ENCODE measurements at regions of chr1 and their contacts with region 1.

Region 1: GRCh38 chr1:44819608-44820327 is 11.4 kb downstream of the BTBD19 start:
- DNase-seq: peak; percentile 87
- H3K4me3 Mint-ChIP-seq: peak overlapping the region; percentile 85
- H3K27ac Mint-ChIP-seq: peak overlapping the region; percentile 98
- H3K4me1 Mint-ChIP-seq: peaks cover 45% of the 10 kb centered on the region
- H3K27me3 Mint-ChIP-seq: no peaks in the 10 kb centered on the region

Region 2: GRCh38 chr1:44739361-44740178 is 80.2 kb before region 1 on chr1 and contains the start of gene KIF2C:
- CTCF ChIA-PET with region 1: no interaction called
- POLR2A ChIA-PET with region 1: interaction called, 13 read pairs
- DNase-seq: peak; percentile 98
- H3K4me3 Mint-ChIP-seq: peak within 1 kb of the TSS; percentile 91
- H3K27ac Mint-ChIP-seq: peak within 1 kb of the TSS; percentile 84
- H3K4me1 Mint-ChIP-seq: peaks cover 45% of the 10 kb centered on the region
- H3K27me3 Mint-ChIP-seq: peaks cover 3% of the 10 kb centered on the region
- total RNA-seq, gene KIF2C: 105 to 106 TPM

Region 3: GRCh38 chr1:44792783-44793714 is 26.7 kb before region 1 on chr1:
- CTCF ChIA-PET with region 1: interaction called, 76 read pairs
- POLR2A ChIA-PET with region 1: interaction called, 960 read pairs
- DNase-seq: no peak
- H3K4me3 Mint-ChIP-seq: no peak overlapping the region
- H3K27ac Mint-ChIP-seq: no peak overlapping the region
- H3K4me1 Mint-ChIP-seq: peaks cover 2% of the 10 kb centered on the region
- H3K27me3 Mint-ChIP-seq: no peaks in the 10 kb centered on the region

Region 4: DNA sequence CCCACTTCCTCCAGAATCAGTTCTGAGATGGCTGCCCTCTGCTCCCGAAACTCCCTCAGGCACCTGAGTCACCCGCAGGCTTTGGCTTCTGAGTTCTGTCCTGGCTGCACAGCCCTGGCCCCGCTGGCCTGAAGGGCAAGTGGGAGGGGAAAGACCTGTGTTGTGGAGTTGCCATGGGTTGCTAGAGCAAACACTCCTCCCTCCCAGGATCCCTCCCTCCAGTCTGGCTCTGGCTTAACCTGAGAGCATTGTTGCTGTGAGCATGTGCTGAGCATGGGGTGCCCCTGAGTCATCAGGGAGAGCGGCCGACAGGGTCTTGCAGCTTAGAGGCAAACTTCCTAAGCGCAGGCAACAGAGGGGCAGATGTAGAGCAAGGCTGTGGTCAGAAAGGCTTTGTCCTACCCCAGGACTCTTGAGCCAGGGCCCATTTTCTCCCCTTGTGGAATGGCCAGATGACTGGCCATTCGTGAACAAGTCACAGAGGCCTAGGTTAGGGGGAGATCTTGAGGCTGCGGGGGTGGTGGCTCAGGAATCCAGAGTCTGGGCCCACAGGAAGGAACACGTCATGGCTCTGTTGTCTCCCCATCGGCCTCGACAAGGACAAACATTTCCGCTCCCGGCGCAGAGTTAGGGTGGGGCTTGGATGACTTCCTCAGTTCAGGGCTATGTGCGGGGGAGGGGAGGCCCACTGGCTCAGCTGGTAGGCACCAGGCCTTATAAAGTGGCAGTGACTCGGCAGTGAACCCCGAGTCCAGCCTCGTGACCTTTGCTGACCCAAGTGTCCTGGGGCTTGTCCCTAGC is 12.3 kb before region 1 on chr1 and contains the start of gene DYNLT4:
- CTCF ChIA-PET with region 1: interaction called, 66 read pairs
- POLR2A ChIA-PET with region 1: interaction called, 960 read pairs
- DNase-seq: peak; percentile 93
- H3K4me3 Mint-ChIP-seq: peak within 1 kb of the TSS; percentile 73
- H3K27ac Mint-ChIP-seq: peak within 1 kb of the TSS; percentile 98
- H3K4me1 Mint-ChIP-seq: peaks cover 92% of the 10 kb centered on the region
- H3K27me3 Mint-ChIP-seq: no peaks in the 10 kb centered on the region
- total RNA-seq, gene DYNLT4: 1.9 to 2.2 TPM

Region 5: DNA sequence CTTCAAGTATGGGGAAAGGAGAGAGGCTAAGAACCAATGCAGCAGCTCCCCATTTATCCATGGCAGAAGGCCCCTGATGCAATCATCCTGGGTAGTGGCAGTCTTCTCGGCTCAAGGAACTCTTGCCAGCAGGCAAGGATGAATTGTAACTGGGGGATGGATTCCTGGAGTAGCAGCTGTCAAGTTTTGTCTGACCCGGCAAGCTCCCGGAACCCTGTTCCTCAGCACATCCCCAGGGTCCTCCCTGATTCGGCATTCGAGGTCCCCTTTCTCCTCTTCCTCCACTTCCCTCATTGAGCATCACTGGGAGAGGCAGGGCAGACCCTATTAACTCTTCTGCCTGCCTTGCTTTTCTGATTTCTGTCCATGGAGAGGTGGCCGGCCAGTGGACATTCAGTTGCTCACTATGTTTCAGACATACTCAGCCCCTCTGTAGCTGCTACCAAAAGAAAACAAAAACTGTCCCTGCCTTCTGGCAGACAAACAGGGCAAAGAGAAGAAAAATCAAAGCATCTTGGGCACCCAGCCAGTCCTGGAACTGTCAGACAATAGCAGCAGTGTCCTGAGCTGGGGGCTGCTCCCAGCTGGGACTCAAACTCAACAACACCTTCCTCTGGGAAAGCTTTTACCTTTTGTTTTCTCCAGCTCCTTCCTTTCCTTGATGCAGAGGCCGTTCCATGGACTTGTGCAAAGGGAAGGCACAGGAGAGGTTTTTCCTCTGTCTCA is 28.9 kb after region 1 on chr1:
- CTCF ChIA-PET with region 1: no interaction called
- POLR2A ChIA-PET with region 1: interaction called, 10 read pairs
- DNase-seq: no peak
- H3K4me3 Mint-ChIP-seq: no peak overlapping the region
- H3K27ac Mint-ChIP-seq: no peak overlapping the region
- H3K4me1 Mint-ChIP-seq: no peaks in the 10 kb centered on the region
- H3K27me3 Mint-ChIP-seq: peaks cover 7% of the 10 kb centered on the region

Measured in activated CD4-positive, alpha-beta memory T cell treated with anti-CD3 and anti-CD28 coated beads, Interleukin-2, amount 10 ng/mL, durations not matched to agents 7 days and 5 days (primary cell).